Activated T-helper 2 cell treated with anti-CD3 and anti-CD28 coated beads, Interferon-gamma antibody, Interleukin-2, Interleukin-4, amounts not matched to agents 10 μg/mL and 5 μg/mL and 100 μg/mL, durations not matched to agents 14 hours and 24 hours and 36 hours (primary cell): ENCODE measurements at regions of chr1 and their contacts with region 1.

Region 1: GRCh38 chr1:91803847-91804545 is 82.0 kb downstream of the TGFBR3 start:
- DNase-seq: peak; percentile 66
- H3K4me3 Mint-ChIP-seq: peak overlapping the region; percentile 74
- H3K27ac Mint-ChIP-seq: peak overlapping the region; percentile 93
- H3K4me1 Mint-ChIP-seq: peaks cover 52% of the 10 kb centered on the region
- H3K27me3 Mint-ChIP-seq: peaks cover 8% of the 10 kb centered on the region

Region 2: GRCh38 chr1:91500756-91501522 is 303.1 kb before region 1 on chr1 and contains the start of gene CDC7:
- intact Hi-C with region 1: loop called (anchors 5 kb)
- DNase-seq: peak; percentile 84
- H3K4me3 Mint-ChIP-seq: no peak within 1 kb of the TSS
- H3K27ac Mint-ChIP-seq: no peak within 1 kb of the TSS
- H3K4me1 Mint-ChIP-seq: peaks cover 29% of the 10 kb centered on the region
- H3K27me3 Mint-ChIP-seq: no peaks in the 10 kb centered on the region
- total RNA-seq, gene CDC7: 27.4 and 28.8 TPM in 2 replicates

Region 3: DNA sequence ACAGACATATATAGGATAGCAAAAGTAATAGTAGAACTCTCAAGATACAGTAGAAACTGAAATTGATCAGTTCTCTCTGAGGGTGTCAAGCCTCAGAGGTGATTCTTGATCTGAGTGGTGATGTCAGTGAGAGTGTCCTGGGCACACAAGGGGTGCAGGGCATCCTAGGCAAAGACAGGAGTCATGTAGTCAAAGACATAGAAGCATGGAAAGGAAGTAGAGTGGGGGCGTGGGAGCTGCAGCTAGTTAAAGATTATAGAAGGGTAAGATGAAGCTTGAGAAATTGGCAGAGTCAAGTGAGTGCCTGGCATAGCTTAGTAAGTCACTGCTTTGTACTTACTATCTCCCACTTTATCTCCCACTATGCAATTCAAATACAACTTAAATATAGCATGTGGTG is 280.5 kb before region 1 on chr1:
- intact Hi-C with region 1: loop called (anchors 1 kb)
- DNase-seq: no peak
- H3K4me3 Mint-ChIP-seq: no peak overlapping the region
- H3K27ac Mint-ChIP-seq: peak overlapping the region; percentile 38
- H3K4me1 Mint-ChIP-seq: peaks cover 47% of the 10 kb centered on the region
- H3K27me3 Mint-ChIP-seq: no peaks in the 10 kb centered on the region

Region 4: DNA sequence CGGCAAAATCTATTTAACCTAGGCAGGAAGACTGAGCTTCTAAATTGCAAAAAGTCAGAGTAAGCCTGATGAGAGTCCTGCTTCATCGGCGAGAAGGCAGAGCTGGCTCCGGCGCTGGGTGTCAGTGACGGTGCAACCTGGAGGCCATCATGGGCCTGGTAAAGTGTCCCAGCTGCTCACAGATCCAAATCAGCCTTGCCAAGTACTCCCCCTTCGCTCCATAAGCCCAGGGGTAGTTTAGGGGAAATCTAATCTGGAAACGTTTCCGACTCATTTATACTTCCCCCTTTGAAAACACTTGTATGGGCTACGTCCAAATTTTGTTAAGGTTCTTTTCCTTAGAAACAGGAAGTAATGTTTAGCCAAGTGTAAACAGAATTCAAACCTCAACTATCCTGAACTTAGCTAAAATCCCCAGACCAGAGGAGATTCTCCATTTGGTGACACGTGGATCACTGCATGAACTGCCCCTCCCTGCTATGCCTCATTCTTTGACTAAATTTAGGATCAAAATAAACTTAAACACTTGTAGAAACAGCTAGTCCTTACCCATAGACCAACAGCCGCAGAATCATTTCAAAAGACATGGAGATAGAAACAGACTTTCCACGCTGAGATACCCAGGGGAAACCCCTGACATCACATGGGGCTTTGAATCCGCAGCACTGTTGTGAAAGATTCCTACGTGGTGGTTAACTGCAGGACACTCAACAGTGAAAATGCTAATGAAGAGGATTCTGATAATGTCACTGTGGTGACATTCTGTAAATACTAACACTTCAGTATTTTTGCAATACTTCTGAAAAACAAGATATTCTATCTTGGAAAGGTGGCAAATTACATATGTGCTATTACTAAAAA is 90.8 kb before region 1 on chr1:
- intact Hi-C with region 1: loop called (anchors 1 kb)
- DNase-seq: peak; percentile 26
- H3K4me3 Mint-ChIP-seq: peak overlapping the region; percentile 60
- H3K27ac Mint-ChIP-seq: peak overlapping the region; percentile 89
- H3K4me1 Mint-ChIP-seq: peaks cover 64% of the 10 kb centered on the region
- H3K27me3 Mint-ChIP-seq: no peaks in the 10 kb centered on the region

Region 5: GRCh38 chr1:91732291-91733107 is 71.5 kb before region 1 on chr1:
- intact Hi-C with region 1: loop called (anchors 1 kb)
- DNase-seq: no peak
- H3K4me3 Mint-ChIP-seq: no peak overlapping the region
- H3K27ac Mint-ChIP-seq: peak overlapping the region; percentile 75
- H3K4me1 Mint-ChIP-seq: peaks cover 57% of the 10 kb centered on the region
- H3K27me3 Mint-ChIP-seq: no peaks in the 10 kb centered on the region

Region 6: DNA sequence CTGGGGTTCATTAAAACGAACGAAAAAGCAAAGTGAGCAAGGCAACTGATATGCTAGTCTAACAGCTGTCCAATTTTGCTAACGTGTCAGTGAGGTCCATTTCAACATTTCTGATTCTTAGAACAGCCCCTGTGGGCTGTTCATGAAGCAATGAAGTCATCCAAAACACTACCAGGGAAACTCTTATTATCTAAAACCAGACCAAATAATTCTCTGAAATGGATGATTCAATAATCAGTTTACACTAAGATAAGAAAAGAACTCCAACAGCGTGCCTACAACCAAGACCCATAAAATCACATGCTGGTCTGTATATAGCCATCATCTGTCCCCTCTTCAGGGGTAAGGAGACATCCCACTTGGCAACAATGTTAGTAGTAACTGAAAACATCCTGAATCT is 40.7 kb before region 1 on chr1:
- intact Hi-C with region 1: loop called (anchors 2 kb)
- DNase-seq: no peak
- H3K4me3 Mint-ChIP-seq: no peak overlapping the region
- H3K27ac Mint-ChIP-seq: peak overlapping the region; percentile 52
- H3K4me1 Mint-ChIP-seq: peaks cover 31% of the 10 kb centered on the region
- H3K27me3 Mint-ChIP-seq: no peaks in the 10 kb centered on the region

Region 7: GRCh38 chr1:91885716-91886506 is 81.9 kb after region 1 on chr1 and contains the start of gene TGFBR3:
- intact Hi-C with region 1: loop called (anchors 2 kb)
- DNase-seq: peak; percentile 61
- H3K4me3 Mint-ChIP-seq: peak within 1 kb of the TSS; percentile 98
- H3K27ac Mint-ChIP-seq: peak within 1 kb of the TSS; percentile 84
- H3K4me1 Mint-ChIP-seq: peaks cover 45% of the 10 kb centered on the region
- H3K27me3 Mint-ChIP-seq: peaks cover 11% of the 10 kb centered on the region
- total RNA-seq, gene TGFBR3: 28.0 and 29.9 TPM in 2 replicates